ENCODE measurements at regions of chr7 and their contacts with region 1.

Region 1: GRCh38 chr7:132488634-132489302 is 87.5 kb downstream of the PLXNA4 start:
- DNase-seq: no peak
- H3K4me3 Mint-ChIP-seq: no peak overlapping the region
- H3K27ac Mint-ChIP-seq: no peak overlapping the region
- H3K4me1 Mint-ChIP-seq: peaks cover 34% of the 10 kb centered on the region
- H3K27me3 Mint-ChIP-seq: no peaks in the 10 kb centered on the region

Region 2: GRCh38 chr7:132430861-132431822 is 57.6 kb before region 1 on chr7:
- CTCF ChIA-PET with region 1: no interaction called
- intact Hi-C with region 1: loop called (anchors 1 kb)
- DNase-seq: peak; percentile 79
- H3K4me3 Mint-ChIP-seq: no peak overlapping the region
- H3K27ac Mint-ChIP-seq: peak overlapping the region; percentile 51
- H3K4me1 Mint-ChIP-seq: peaks cover 65% of the 10 kb centered on the region
- H3K27me3 Mint-ChIP-seq: no peaks in the 10 kb centered on the region

Region 3: GRCh38 chr7:132464746-132465145 is 24.0 kb before region 1 on chr7:
- CTCF ChIA-PET with region 1: interaction called, 3 read pairs
- intact Hi-C with region 1: loop called (anchors 2 kb)
- DNase-seq: no peak
- H3K4me3 Mint-ChIP-seq: no peak overlapping the region
- H3K27ac Mint-ChIP-seq: no peak overlapping the region
- H3K4me1 Mint-ChIP-seq: peaks cover 22% of the 10 kb centered on the region
- H3K27me3 Mint-ChIP-seq: no peaks in the 10 kb centered on the region

Region 4: GRCh38 chr7:132773527-132773956 is 284.8 kb after region 1 on chr7:
- CTCF ChIA-PET with region 1: no interaction called
- intact Hi-C with region 1: loop called (anchors 5 kb)
- DNase-seq: no peak
- H3K4me3 Mint-ChIP-seq: no peak overlapping the region
- H3K27ac Mint-ChIP-seq: no peak overlapping the region
- H3K4me1 Mint-ChIP-seq: peaks cover 39% of the 10 kb centered on the region
- H3K27me3 Mint-ChIP-seq: no peaks in the 10 kb centered on the region

Region 5: DNA sequence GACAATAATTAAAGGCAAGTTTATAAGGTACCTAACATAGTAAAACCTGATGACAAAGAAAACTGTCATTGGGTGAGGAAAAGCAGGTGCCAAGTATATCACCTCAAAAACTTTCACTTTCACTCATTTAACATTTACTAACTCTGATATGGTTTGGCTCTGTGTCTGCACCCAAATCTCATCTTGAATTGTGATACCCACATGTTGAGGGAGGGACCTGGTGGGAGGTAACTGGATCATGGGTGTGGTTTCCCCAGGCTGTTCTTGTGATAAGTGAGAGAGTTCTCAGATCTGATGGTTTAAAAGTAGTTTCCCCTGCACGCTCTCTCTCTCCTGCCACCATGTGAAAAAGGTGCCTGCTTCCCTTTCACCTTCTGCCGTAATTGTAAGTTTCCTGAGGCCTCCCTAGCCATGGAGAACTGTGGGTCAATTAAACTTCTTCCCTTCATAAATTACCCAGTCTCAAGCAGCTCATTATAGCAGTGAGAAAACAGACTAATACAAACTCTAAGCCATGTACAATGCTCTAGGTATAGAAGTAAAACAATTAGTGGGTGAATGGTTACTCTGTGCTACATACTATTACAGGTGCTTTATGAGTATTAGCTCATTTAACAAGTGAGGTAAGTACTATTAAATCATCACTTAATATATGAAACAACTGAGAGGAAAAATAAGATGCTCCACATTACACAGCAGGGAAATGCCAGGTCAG is 394.1 kb after region 1 on chr7:
- CTCF ChIA-PET with region 1: no interaction called
- intact Hi-C with region 1: no loop called
- DNase-seq: peak; percentile 65
- H3K4me3 Mint-ChIP-seq: no peak overlapping the region
- H3K27ac Mint-ChIP-seq: peak overlapping the region; percentile 47
- H3K4me1 Mint-ChIP-seq: peaks cover 32% of the 10 kb centered on the region
- H3K27me3 Mint-ChIP-seq: no peaks in the 10 kb centered on the region